Esophagus muscularis mucosa (tissue), 4 donors: ENCODE measurements at regions of chr17 and their contacts with region 1.

Region 1: DNA sequence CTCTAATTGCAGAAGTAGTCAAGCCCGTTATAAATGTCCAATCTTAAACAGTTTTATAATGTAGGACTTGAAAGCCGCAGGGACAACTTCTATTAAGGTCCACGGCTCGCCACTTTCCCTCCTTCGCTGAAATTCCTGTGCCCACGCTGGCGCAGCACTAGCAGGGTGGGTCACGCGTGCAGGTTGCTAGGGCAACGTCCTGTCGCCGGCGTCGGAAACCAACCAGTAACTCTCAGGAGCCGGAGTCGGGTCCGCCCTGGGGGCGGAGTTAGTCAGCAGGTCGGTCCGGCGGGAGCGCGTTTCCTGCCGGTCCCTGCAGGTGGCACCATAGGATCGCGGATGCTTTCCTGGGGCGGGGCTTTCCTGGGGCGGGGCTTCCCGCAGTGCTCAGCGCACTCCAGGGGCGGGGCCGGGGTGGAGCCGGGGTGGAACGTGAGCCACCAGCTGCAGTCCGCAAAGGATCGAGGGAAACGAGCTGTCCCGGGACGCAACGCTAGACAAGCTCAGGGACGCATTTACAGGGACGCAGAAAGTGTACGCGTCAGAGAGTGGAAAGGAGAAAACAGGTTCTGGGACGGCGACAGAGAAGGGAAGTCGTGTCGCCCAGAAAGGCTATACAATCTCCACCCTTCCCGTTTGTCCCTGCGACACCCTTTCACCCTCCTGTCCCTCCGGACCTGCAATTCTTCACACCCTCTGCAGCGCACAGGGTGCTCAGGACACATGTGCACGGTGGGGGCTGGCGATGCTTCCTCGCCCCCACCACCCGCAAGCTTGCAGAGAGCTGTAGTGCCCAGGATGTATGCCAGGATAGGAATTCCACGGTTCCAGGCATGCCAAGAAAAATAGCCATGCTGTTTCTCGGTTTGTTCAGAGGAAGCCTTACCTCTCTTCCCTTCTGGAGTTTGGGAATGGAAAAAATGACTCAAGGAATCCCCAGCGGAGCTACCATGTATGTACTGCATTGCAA is 12.4 kb downstream of the COPZ2 start:
- DNase-seq: peak; percentile 100
- H3K4me3 ChIP-seq: peak overlapping the region; percentile 52 to 64 (median 56)
- H3K27ac ChIP-seq: peak overlapping the region; percentile 81 to 92 (median 86)
- H3K4me1 ChIP-seq: peaks cover 36 to 42% (median 41%) of the 10 kb centered on the region in 4 donors
- H3K27me3 ChIP-seq: peaks cover 0 to 28% (median 2%) of the 10 kb centered on the region in 4 donors
- CTCF ChIP-seq: peak; percentile 93 to 94 (median 94)
- EP300 ChIP-seq: no peak
- POLR2A ChIP-seq: no peak

Region 2: DNA sequence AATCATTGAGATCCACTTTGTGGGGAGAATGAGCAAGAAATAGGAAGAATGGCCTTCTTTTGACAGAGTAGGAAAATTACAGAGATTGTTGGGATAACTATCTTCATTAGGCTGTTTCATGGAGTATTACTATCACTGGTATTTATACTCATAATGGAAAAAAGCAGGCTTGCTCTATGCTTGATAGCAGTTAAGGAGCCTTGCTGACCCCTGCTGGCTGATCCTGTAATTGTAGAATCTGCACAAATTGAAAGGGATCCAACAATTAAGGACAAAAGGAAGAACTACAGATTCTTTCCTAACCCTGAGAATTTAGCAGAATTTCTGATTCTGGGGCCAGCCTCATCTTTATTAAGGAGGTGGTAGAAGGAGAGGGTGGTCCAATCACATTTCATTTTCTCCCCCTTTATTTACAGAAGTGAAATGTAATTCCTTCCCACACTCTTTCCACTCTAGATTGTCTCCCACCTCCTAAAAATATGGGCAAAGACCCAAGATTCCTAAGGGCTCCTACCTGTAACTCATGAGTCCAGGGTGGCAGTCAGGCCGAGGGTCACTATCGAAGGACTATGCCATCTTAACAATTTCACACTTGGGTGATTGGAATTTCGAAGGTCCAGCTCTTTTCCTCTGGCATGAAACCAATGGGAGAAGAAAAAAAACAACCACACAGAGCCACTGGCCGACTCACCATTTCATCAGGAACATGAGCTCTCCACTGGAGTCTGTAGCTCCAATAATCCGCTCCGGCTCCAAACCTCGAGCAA is 49.3 kb after region 1 on chr17:
- intact Hi-C with region 1: loop called (anchors 1 kb)
- DNase-seq: peak; percentile 95
- H3K4me3 ChIP-seq: no peak overlapping the region
- H3K27ac ChIP-seq: peak overlapping the region in 3 of 4 donors; percentile 7 to 34 (median 31)
- H3K4me1 ChIP-seq: peaks cover 5 to 9% (median 7%) of the 10 kb centered on the region in 4 donors
- H3K27me3 ChIP-seq: no peaks in the 10 kb centered on the region
- CTCF ChIP-seq: peak; percentile 83 to 94 (median 86)
- EP300 ChIP-seq: no peak
- POLR2A ChIP-seq: no peak

Region 3: GRCh38 chr17:48162946-48163506 is 137.8 kb after region 1 on chr17:
- intact Hi-C with region 1: no loop called
- DNase-seq: no peak
- H3K4me3 ChIP-seq: no peak overlapping the region
- H3K27ac ChIP-seq: no peak overlapping the region
- H3K4me1 ChIP-seq: no peaks in the 10 kb centered on the region
- H3K27me3 ChIP-seq: peaks cover 0 to 23% (median 0%) of the 10 kb centered on the region in 4 donors
- CTCF ChIP-seq: no peak
- EP300 ChIP-seq: no peak
- POLR2A ChIP-seq: no peak